BJ (cell line): ENCODE measurements at regions of chr17 and their contacts with region 1.

Region 1: GRCh38 chr17:41648411-41649195 is 24.2 kb upstream of the KRT17 start:
- DNase-seq: no peak
- H3K4me3 ChIP-seq: peak overlapping the region; percentile 36
- H3K27me3 ChIP-seq: no peaks in the 10 kb centered on the region
- CTCF ChIP-seq: peak; percentile 99

Region 2: GRCh38 chr17:40803617-40804082 is 845.0 kb before region 1 on chr17:
- CTCF ChIA-PET with region 1: interaction called, 26 read pairs
- POLR2A ChIA-PET with region 1: no interaction called
- DNase-seq: no peak
- H3K4me3 ChIP-seq: no peak overlapping the region
- H3K27me3 ChIP-seq: peaks cover 11% of the 10 kb centered on the region
- CTCF ChIP-seq: peak; percentile 90

Region 3: DNA sequence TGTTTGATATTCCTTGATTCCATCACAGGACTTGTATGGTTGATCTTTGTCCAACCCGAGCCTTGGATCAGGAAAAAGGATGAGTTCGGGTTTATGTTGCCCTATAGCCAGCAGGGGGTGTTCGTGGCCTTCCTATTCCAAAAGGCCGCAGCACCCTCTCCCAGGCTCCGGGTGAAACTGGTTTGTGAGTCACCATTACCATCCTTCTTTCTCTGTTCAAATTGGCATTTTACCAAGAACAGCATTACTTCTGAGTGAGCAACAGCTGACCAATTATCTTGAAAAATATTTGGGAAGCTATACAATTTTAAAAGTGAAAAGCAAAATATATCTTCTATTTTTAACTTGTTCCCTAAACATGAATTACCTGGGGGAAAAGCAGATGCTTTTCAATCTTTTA is 739.3 kb before region 1 on chr17:
- CTCF ChIA-PET with region 1: interaction called, 32 read pairs
- POLR2A ChIA-PET with region 1: no interaction called
- DNase-seq: peak; percentile 83
- H3K4me3 ChIP-seq: no peak overlapping the region
- H3K27me3 ChIP-seq: no peaks in the 10 kb centered on the region
- CTCF ChIP-seq: peak; percentile 75

Region 4: GRCh38 chr17:41505809-41506731 is 142.5 kb before region 1 on chr17:
- CTCF ChIA-PET with region 1: interaction called, 11 read pairs
- POLR2A ChIA-PET with region 1: no interaction called
- DNase-seq: no peak
- H3K4me3 ChIP-seq: no peak overlapping the region
- H3K27me3 ChIP-seq: no peaks in the 10 kb centered on the region
- CTCF ChIP-seq: no peak

Region 5: GRCh38 chr17:41585301-41586056 is 63.1 kb before region 1 on chr17:
- CTCF ChIA-PET with region 1: interaction called, 12 read pairs
- POLR2A ChIA-PET with region 1: no interaction called
- DNase-seq: no peak
- H3K4me3 ChIP-seq: no peak overlapping the region
- H3K27me3 ChIP-seq: peaks cover 4% of the 10 kb centered on the region; the same call in 1 of the 2 replicates
- CTCF ChIP-seq: no peak

Region 6: GRCh38 chr17:41620586-41621434 is 27.8 kb before region 1 on chr17:
- CTCF ChIA-PET with region 1: interaction called, 22 read pairs
- POLR2A ChIA-PET with region 1: interaction called, 6 read pairs
- DNase-seq: peak; percentile 31
- H3K4me3 ChIP-seq: no peak overlapping the region
- H3K27me3 ChIP-seq: no peaks in the 10 kb centered on the region
- CTCF ChIP-seq: 0 out of 2 replicates have a peak, but pooled peaks have one; percentile 9

Region 7: GRCh38 chr17:41665566-41666236 is 17.1 kb after region 1 on chr17:
- CTCF ChIA-PET with region 1: interaction called, 271 read pairs
- POLR2A ChIA-PET with region 1: no interaction called
- DNase-seq: no peak
- H3K4me3 ChIP-seq: peak overlapping the region; percentile 38
- H3K27me3 ChIP-seq: no peaks in the 10 kb centered on the region
- CTCF ChIP-seq: peak; percentile 80

Region 8: GRCh38 chr17:41824086-41824485 is 175.5 kb after region 1 on chr17:
- CTCF ChIA-PET with region 1: no interaction called
- POLR2A ChIA-PET with region 1: no interaction called
- DNase-seq: no peak
- H3K4me3 ChIP-seq: no peak overlapping the region
- H3K27me3 ChIP-seq: no peaks in the 10 kb centered on the region
- CTCF ChIP-seq: no peak